ENCODE measurements at regions of chr3 and their contacts with region 1.

Region 1: DNA sequence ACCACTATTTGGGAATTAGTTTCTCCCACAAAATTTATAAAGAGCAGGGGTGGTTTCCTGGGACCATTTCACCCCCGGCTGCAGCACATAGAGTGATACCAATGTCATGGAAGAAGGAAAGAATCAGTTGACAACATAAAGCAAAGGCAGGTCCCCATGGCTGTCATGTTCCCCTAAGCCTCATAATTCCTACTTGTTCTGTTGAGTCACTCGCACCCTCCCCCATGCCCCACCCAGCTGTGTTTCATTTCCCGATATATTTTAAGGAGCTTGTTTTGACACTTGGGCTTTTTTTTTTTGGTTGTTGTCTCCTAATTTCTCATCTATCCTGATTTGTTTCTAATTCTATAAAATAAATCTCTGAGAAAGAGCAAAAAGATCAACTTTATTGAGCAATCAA is 24.9 kb downstream of the ERC2 start:
- DNase-seq: no peak
- H3K4me3 ChIP-seq: no peak overlapping the region
- H3K27ac ChIP-seq: no peak overlapping the region
- H3K4me1 ChIP-seq: no peaks in the 10 kb centered on the region; a peak in 1 of 4 replicates
- H3K27me3 ChIP-seq: no peaks in the 10 kb centered on the region
- CTCF ChIP-seq: no peak
- EP300 ChIP-seq: no peak
- RAD21 ChIP-seq: no peak

Region 2: GRCh38 chr3:56157693-56158362 is 285.5 kb before region 1 on chr3:
- CTCF ChIA-PET with region 1: no interaction called
- POLR2A ChIA-PET with region 1: no interaction called
- DNase-seq: no peak
- H3K4me3 ChIP-seq: no peak overlapping the region
- H3K27ac ChIP-seq: no peak overlapping the region
- H3K4me1 ChIP-seq: no peaks in the 10 kb centered on the region
- H3K27me3 ChIP-seq: no peaks in the 10 kb centered on the region
- CTCF ChIP-seq: no peak
- EP300 ChIP-seq: no peak
- RAD21 ChIP-seq: no peak

Region 3: GRCh38 chr3:56423661-56424099 is 19.7 kb before region 1 on chr3:
- CTCF ChIA-PET with region 1: interaction called, 15 read pairs
- POLR2A ChIA-PET with region 1: no interaction called
- DNase-seq: peak; percentile 35
- H3K4me3 ChIP-seq: no peak overlapping the region
- H3K27ac ChIP-seq: peak overlapping the region in 1 of 2 experiments; percentile 58; a peak in 2 of 4 replicates
- H3K4me1 ChIP-seq: peaks cover 0 to 11% of the 10 kb centered on the region in 2 experiments; a peak in 2 of 4 replicates
- H3K27me3 ChIP-seq: no peaks in the 10 kb centered on the region
- CTCF ChIP-seq: no peak
- EP300 ChIP-seq: peak in 1 of 2 experiments; percentile 8; a peak in 1 of 4 replicates
- RAD21 ChIP-seq: no peak

Measured in SK-N-SH (cell line).